ENCODE measurements at regions of chr4 and their contacts with region 1.

Region 1: DNA sequence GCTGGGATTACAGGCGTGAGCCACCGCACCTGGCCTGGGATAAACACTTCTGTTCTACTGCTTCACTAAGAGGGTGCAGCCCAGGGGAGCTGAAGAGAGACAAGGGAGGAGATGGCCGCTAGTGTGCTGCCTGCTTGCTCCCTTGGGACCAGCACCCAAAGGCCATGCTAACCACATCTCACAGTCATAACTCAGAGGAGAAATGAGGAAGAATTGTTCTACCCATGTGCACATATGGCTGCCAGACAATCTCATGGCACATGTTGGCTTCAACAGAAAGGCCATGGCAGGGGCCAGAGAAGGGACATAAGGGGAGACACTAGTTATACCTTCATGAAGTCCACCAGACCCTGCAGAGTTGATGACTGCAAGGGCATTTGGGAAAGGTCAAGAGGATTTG is 22.4 kb downstream of the CLDN22 start:
- DNase-seq: no peak
- H3K4me3 ChIP-seq: no peak overlapping the region
- H3K27ac ChIP-seq: no peak overlapping the region
- H3K4me1 ChIP-seq: no peaks in the 10 kb centered on the region
- H3K27me3 ChIP-seq: no peaks in the 10 kb centered on the region
- CTCF ChIP-seq: no peak
- EP300 ChIP-seq: no peak
- POLR2A ChIP-seq: no peak

Region 2: GRCh38 chr4:183374950-183375555 is 77.4 kb after region 1 on chr4:
- intact Hi-C with region 1: no loop called
- DNase-seq: no peak
- H3K4me3 ChIP-seq: no peak overlapping the region
- H3K27ac ChIP-seq: no peak overlapping the region
- H3K4me1 ChIP-seq: no peaks in the 10 kb centered on the region
- H3K27me3 ChIP-seq: no peaks in the 10 kb centered on the region
- CTCF ChIP-seq: no peak
- EP300 ChIP-seq: no peak
- POLR2A ChIP-seq: no peak

Region 3: DNA sequence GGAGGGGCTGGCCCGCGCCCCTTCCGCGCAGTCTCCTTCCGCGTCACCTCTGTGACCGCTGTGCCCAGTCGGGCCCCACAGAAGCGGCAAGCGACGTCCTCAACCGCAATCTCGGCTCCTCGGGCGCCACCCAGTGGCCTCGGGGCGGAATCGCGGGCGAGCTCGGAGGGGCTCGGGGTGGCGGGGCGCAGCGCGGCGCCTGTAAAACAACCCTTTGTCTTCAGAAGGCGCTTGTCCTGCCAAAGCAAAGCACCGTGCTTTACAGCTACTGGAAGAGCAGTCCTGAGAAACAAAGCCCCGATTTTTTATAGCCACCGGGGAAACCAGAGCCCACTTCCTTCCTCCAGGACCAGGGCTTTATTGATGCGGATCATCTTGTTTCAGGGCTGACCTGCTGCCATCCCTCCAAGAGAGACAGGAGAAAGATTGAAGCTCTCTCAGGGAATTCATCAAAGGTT is 109.5 kb after region 1 on chr4:
- intact Hi-C with region 1: loop called (anchors 10 kb)
- DNase-seq: peak; percentile 94
- H3K4me3 ChIP-seq: peak overlapping the region; percentile 46 to 63 (median 49)
- H3K27ac ChIP-seq: peak overlapping the region; percentile 3 to 61 (median 42)
- H3K4me1 ChIP-seq: peaks cover 0 to 7% (median 5%) of the 10 kb centered on the region in 4 donors
- H3K27me3 ChIP-seq: no peaks in the 10 kb centered on the region
- CTCF ChIP-seq: peak in 2 of 3 experiments; percentile 87 to 95
- EP300 ChIP-seq: no peak
- POLR2A ChIP-seq: no peak

Measured in esophagus muscularis mucosa (tissue), 4 donors.